CD14-positive monocyte (primary cell): ENCODE measurements at regions of chr17 and their contacts with region 1.

Region 1: GRCh38 chr17:82559566-82560251 is 40.2 kb downstream of the FOXK2 start:
- DNase-seq: no peak
- H3K4me3 ChIP-seq: no peak overlapping the region
- H3K4me3 Mint-ChIP-seq: no peak overlapping the region
- H3K27ac ChIP-seq: no peak overlapping the region
- H3K27ac Mint-ChIP-seq: no peak overlapping the region
- H3K4me1 ChIP-seq: peaks cover 7 to 8% of the 10 kb centered on the region in 2 donors
- H3K4me1 Mint-ChIP-seq: peaks cover 11% of the 10 kb centered on the region
- H3K27me3 ChIP-seq: no peaks in the 10 kb centered on the region
- H3K27me3 Mint-ChIP-seq: no peaks in the 10 kb centered on the region
- CTCF ChIP-seq: no peak

Region 2: GRCh38 chr17:82358465-82359350 is 201.0 kb before region 1 on chr17 and contains the start of gene TEX19:
- intact Hi-C with region 1: loop called in 1 of 2 experiments (anchors 5 kb)
- DNase-seq: no peak
- H3K4me3 ChIP-seq: no peak within 1 kb of the TSS
- H3K4me3 Mint-ChIP-seq: peak within 1 kb of the TSS in 1 of 2 donors; percentile 46
- H3K27ac ChIP-seq: no peak within 1 kb of the TSS
- H3K27ac Mint-ChIP-seq: peak within 1 kb of the TSS in 2 of 7 donors; percentile 38 to 59
- H3K4me1 ChIP-seq: peaks cover 4% of the 10 kb centered on the region in 2 donors
- H3K4me1 Mint-ChIP-seq: peaks cover 6% of the 10 kb centered on the region
- H3K27me3 ChIP-seq: no peaks in the 10 kb centered on the region
- H3K27me3 Mint-ChIP-seq: peaks cover 13 to 15% (median 15%) of the 10 kb centered on the region in 3 donors
- CTCF ChIP-seq: no peak
- polyA plus RNA-seq, gene TEX19: not detected